Cardiac septum (tissue), 1 donor: ENCODE measurements at regions of chr15 and their contacts with region 1.

Region 1: DNA sequence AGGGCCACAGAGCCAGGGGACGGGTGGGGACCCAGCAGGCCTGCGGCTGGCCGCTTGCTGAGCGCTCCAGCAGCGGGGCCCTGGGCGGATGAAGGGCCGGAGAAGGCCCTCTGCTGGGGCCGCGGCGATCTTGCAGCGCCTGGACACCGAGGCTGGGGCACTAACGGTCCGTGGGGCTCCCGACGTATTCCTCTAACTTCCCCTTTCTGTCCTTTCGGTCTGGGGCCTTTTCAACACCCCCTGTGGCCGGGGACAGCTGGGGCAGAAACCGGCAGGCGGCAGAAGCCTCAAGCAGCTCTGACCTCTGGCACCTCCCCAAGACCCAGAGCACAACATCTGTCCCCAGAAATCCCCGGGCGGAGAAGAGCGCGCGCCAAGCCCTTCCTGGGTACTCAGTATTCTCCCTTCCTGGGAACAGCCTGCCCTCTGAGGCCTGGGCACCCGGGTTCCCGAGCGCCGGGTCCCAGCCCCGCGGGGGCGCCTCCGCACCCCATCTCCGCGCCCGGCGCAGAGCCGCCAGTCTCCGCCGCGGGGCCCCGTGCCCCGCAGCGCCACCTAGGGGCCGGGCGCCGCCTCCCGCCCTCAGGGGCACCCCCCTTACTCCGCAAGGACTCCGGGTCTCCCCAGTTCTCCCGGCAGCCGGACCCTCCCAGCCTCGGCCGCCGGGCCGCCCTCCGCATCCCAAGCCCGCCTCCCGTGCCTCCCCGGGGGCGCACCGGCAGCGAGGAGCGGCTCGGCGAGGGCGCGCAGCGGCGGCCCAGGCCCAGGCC is 582 bp upstream of the SLCO3A1 start:
- DNase-seq: peak; percentile 93

Region 2: DNA sequence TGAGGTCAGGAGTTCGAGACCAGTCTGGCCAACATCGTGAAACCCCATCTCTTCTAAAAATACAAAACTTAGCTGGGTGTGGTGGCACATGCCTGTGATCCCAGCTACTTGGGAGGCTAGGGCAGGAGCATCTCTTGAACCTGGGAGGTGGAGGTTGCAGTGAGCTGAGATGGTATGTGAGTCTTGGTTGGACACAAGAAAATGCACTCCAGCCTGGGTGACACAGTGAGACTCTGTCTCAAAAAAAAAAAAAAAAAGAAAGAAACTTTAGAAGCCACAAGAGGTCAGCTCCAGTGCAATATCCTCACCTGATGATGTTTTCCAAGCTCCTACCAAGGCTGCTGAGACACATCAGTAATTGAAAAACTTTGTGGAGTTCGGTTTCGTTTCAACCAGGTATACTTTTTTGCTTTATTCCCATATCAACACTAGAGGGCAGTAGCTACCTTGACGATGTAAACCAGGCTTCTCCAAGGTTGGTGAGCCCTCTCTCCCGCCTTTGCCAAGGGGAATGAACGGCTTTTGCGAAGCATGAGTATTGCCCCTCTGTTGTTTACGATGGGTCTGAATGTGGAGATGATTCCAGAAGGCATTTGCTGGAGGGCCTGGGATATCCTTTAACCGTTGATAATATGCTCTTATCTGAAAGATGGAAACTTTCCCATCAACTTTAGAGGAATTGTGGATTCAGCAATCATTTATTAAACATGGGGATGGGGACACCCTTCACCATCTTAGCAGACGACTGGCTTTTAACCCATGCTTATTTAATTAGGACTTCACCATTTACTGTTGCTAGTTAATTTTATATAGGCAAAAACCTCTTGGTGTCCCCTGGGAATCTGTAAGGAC is 550.1 kb before region 1 on chr15:
- intact Hi-C with region 1: loop called (anchors 5 kb)
- DNase-seq: no peak

Region 3: GRCh38 chr15:91706322-91707032 is 146.4 kb before region 1 on chr15:
- intact Hi-C with region 1: loop called (anchors 5 kb)
- DNase-seq: peak; percentile 91

Region 4: GRCh38 chr15:91950054-91950453 is 97.1 kb after region 1 on chr15:
- intact Hi-C with region 1: no loop called
- DNase-seq: no peak

Region 5: GRCh38 chr15:91965501-91966184 is 112.7 kb after region 1 on chr15:
- intact Hi-C with region 1: loop called (anchors 5 kb)
- DNase-seq: no peak

Region 6: DNA sequence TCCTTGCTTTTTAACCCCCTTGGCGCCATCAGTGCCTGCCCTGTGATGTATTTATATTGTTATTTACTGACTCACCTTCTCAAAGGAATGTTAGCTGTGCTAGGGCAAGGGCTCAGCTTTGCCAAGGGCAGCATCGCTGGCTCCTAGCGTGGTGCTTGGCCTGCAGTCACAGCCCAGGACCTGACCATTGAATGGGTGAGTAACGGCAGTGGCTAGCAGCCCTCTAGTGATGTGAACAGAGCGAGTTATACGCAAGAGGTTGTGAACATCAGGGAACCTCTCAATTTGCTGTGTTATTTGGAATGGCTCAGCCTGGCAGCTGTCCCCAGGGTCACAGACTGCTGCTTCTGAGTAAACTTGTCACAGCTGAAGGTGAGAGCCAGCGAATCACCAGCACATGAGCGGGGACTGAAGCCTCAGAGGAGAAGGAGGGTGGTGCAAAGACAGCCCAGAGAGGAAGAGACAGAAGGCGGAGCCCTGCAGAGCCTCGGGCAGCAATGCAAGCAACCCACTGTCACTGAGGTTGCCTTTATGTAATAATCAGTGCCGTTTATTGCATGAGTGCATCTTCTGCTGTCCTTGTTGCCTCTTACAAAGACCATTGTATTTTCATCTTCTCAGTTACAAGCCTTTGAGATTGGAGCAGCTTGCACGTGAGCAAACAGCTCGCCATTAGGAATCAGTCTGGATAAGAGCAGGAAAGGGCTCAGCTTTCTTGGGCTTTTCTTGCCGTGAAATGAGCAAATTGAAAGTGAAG is 158.9 kb after region 1 on chr15:
- intact Hi-C with region 1: no loop called
- DNase-seq: no peak

Region 7: DNA sequence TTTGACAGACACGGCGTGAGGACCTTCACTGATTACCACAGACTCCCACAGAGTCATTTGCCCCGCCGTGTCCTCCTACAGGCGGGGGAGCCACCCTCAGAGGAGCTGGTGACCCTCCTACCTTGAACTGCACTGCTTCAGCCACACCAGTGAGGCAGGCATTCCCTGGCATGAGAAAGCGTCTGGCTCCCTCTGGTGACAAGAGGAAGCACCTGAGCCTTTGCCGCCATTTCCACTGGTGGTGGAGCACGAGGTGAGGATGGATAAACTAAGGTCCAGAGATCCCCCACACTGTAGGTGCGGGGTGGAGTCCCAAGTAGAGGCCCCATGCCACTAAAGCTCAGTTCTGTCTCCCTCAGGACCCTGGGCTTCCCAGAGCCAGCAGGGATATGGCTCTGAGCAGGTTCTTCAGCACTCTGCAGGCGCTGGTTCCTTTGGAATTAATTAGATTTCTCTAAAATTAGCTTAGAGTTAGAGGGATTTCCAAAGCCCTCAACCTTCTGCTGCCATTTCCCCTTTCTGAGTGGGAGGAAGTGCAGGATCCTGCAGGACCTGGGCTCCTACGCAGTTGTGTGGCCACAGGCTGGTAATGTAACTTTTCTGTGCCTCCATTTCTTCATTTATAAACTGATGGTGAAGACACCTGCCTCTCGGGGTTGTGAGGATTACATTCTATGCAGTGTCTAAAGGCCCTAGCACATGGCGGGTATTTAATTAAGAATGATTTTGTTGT is 224.6 kb after region 1 on chr15:
- intact Hi-C with region 1: loop called (anchors 1 kb)
- DNase-seq: peak; percentile 89

Region 8: GRCh38 chr15:92316586-92317295 is 463.8 kb after region 1 on chr15:
- intact Hi-C with region 1: no loop called
- DNase-seq: no peak